ENCODE measurements at regions of chr12 and their contacts with region 1.

Region 1: DNA sequence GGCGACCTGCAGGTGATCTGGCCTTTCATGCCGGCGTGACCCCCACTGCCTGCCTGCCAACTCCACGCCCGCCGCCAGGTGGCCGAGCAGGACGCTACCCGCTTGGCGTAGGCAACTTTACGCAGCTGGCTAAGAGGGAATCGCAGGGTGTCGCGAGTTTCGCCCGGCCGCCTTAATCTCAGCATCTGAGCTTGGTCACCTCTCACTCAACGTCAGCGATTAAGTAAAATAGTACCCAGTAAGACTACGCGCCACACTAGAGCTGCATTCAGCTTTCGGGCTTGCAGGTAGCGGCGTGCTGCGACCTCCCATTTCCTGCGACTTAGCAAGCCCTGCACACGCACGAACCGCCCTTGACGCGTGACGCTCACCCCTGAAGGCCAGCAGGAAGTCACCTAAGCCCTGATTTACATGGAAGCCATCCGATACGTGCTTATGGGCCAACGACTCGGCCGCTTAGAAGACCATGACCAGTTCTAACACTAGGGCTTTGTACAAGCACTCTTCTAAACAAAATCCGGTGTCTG is 33.2 kb downstream of the WBP11 start:
- DNase-seq: peak; percentile 95
- H3K4me3 Mint-ChIP-seq: peak overlapping the region; percentile 96
- H3K27ac Mint-ChIP-seq: peak overlapping the region; percentile 99
- H3K4me1 Mint-ChIP-seq: peaks cover 51% of the 10 kb centered on the region
- H3K27me3 Mint-ChIP-seq: no peaks in the 10 kb centered on the region

Region 2: DNA sequence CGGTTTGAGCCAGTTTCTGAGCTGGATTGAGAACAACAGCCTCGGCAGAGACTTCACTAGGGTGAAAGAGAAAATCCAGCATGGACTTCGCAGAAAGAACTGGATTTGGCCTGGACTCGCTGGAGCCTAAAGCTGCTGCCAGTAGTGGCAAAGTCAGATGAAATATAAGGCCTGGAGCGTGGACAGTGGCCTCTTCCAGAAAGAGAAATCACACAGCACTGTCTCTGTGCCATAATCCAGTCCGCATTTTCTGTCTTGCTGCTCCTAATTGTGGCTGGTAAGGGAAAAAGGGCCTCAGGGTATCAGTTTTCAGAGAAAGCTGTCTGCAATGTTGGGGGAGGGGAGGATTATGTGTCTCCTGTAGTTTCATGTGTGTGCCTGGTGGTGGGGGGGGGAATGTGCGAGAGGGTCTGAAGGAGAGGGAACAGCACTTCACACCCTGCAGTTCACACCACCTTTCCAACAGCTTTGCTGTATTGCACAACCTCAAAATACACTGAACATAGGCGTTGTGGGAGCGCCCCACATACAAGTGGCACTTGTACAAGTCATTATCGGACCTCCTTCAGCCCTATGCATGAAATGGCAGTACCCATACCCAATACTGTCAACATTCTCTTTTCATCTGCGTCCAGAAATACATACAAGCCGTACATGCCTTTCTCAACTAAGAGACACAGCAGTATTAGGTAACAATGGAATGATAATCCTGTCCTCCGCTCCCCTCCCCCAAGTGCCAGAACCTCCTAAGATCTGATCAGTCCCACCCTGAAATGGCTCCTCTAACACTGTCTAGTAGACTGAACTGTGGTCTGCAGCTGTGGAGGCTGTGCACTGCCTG is 512.1 kb before region 1 on chr12:
- intact Hi-C with region 1: loop called (anchors 2 kb)
- DNase-seq: peak; percentile 95
- H3K4me3 Mint-ChIP-seq: peak overlapping the region; percentile 81
- H3K27ac Mint-ChIP-seq: peak overlapping the region; percentile 99
- H3K4me1 Mint-ChIP-seq: peaks cover 45% of the 10 kb centered on the region
- H3K27me3 Mint-ChIP-seq: no peaks in the 10 kb centered on the region

Region 3: GRCh38 chr12:14454098-14454907 is 315.7 kb before region 1 on chr12:
- intact Hi-C with region 1: loop called (anchors 10 kb)
- DNase-seq: peak; percentile 80
- H3K4me3 Mint-ChIP-seq: peak overlapping the region; percentile 39
- H3K27ac Mint-ChIP-seq: peak overlapping the region; percentile 69
- H3K4me1 Mint-ChIP-seq: peaks cover 47% of the 10 kb centered on the region
- H3K27me3 Mint-ChIP-seq: no peaks in the 10 kb centered on the region

Region 4: DNA sequence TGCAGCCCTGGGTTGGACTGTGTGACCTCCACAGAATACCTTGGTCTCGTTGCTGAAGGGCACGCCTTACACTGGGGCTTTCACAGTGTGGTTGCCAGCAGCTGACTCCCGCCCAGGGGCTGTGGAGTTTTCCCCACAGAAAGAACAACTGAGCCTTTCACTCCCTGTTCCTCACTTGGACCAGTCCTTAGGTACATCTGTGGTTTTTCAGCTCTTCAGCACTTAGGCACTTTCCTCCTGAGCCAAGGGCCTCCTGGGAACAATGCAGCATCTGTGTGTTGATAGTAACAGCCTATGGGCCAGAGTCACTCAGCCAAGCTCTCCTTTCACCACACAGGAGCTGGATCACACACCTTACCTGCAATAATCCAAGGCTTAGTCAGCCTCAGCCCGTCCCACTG is 143.3 kb after region 1 on chr12:
- intact Hi-C with region 1: loop called (anchors 2 kb)
- DNase-seq: no peak
- H3K4me3 Mint-ChIP-seq: no peak overlapping the region
- H3K27ac Mint-ChIP-seq: no peak overlapping the region
- H3K4me1 Mint-ChIP-seq: peaks cover 19% of the 10 kb centered on the region
- H3K27me3 Mint-ChIP-seq: no peaks in the 10 kb centered on the region

Region 5: GRCh38 chr12:15404485-15404884 is 634.5 kb after region 1 on chr12:
- intact Hi-C with region 1: no loop called
- DNase-seq: no peak
- H3K4me3 Mint-ChIP-seq: no peak overlapping the region
- H3K27ac Mint-ChIP-seq: no peak overlapping the region
- H3K4me1 Mint-ChIP-seq: no peaks in the 10 kb centered on the region
- H3K27me3 Mint-ChIP-seq: no peaks in the 10 kb centered on the region

Region 6: GRCh38 chr12:15700595-15700994 is 930.6 kb after region 1 on chr12:
- intact Hi-C with region 1: loop called (anchors 5 kb)
- DNase-seq: peak; percentile 74
- H3K4me3 Mint-ChIP-seq: peak overlapping the region; percentile 77
- H3K27ac Mint-ChIP-seq: peak overlapping the region; percentile 95
- H3K4me1 Mint-ChIP-seq: peaks cover 33% of the 10 kb centered on the region
- H3K27me3 Mint-ChIP-seq: no peaks in the 10 kb centered on the region

Measured in activated CD4-positive, alpha-beta T cell treated with anti-CD3 and anti-CD28 coated beads, Interleukin-2, amount 10 ng/mL, durations not matched to agents 24 days and 14 days (primary cell).